Heart left ventricle (tissue), 16 donors: ENCODE measurements at regions of chr22 and their contacts with region 1.

Region 1: DNA sequence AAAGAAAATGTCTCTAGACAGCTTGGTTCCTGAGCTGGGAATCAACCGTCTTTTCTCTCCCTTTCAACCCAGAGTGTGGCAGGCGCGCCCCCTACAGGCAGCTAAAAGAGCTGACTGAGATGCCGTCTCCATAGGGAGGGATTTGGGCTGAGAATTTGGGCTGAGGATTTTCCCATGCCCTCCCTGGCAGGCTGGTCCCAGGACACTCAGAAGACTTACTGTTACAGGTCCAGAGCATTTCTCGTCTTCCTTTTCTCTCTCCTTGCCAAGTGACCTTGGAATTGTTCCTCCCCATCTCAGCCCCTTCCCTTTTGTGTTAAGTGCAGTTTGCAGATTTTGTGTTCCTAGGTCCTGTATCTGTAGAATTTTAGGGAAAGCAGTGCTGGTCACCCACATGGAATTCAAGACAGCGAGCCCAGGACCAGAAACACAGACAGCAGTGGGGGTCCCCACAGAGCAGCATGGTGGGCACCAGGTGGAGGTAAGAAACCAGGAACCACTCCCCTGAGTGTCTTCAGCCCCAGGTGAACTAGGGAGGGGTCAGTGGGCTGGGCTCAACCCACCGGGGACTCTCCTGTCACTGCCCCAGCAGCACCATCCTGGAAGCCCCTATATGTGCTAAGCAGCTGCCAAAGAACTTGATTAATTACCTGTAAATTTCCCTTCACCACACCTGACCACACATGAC is 9.9 kb upstream of the IGLL5 start:
- DNase-seq: peak in 4 of 5 donors; percentile 50 to 78 (median 57)
- ATAC-seq: peak in 2 of 4 donors; percentile 52 to 59
- H3K4me3 ChIP-seq: no peak overlapping the region
- H3K27ac ChIP-seq: no peak overlapping the region
- H3K4me1 ChIP-seq: no peaks in the 10 kb centered on the region
- H3K27me3 ChIP-seq: peaks cover 0 to 6% (median 0%) of the 10 kb centered on the region in 9 donors
- CTCF ChIP-seq: peak; percentile 45 to 84 (median 67)
- POLR2A ChIP-seq: no peak

Region 2: GRCh38 chr22:22810018-22810427 is 67.6 kb before region 1 on chr22:
- intact Hi-C with region 1: loop called in 4 of 10 experiments (anchors 2 to 10 kb)
- DNase-seq: peak in 3 of 5 donors; percentile 46 to 65 (median 53)
- ATAC-seq: peak in 3 of 4 donors; percentile 45 to 77 (median 47)
- H3K4me3 ChIP-seq: no peak overlapping the region
- H3K27ac ChIP-seq: no peak overlapping the region
- H3K4me1 ChIP-seq: peaks cover 0 to under 1% (median 0%) of the 10 kb centered on the region in 12 donors
- H3K27me3 ChIP-seq: peaks cover 0 to 24% (median 0%) of the 10 kb centered on the region in 9 donors
- CTCF ChIP-seq: peak in 11 of 12 donors; percentile 42 to 82 (median 65)
- POLR2A ChIP-seq: no peak